Aorta (tissue), 5 donors: ENCODE measurements at regions of chr7 and their contacts with region 1.

Region 1: DNA sequence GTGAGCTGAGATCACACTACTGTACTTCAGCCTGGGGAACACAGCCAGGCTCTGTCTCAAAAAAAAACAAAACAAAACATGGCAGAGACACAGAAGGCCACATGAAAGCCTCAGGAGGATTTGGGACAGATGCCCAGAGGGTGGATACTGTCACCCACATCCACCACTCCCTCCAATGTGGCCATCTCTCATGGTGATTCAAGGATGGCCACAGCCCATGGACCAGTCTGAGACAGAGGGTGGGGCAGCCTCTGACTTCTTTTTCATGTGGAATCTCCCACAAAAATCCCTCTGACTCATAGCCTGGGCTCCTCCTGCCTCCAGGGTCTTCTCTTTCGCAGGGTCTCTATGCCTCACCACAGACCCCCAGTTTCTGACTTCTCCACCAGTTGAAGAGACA is 59.0 kb upstream of the GTF2I start:
- DNase-seq: no peak
- ATAC-seq: no peak
- H3K4me3 ChIP-seq: no peak overlapping the region
- H3K27ac ChIP-seq: no peak overlapping the region
- H3K4me1 ChIP-seq: no peaks in the 10 kb centered on the region
- H3K27me3 ChIP-seq: no peaks in the 10 kb centered on the region

Region 2: GRCh38 chr7:74625446-74625845 is 26.9 kb after region 1 on chr7:
- intact Hi-C with region 1: no loop called
- DNase-seq: no peak
- ATAC-seq: peak; percentile 75
- H3K4me3 ChIP-seq: no peak overlapping the region
- H3K27ac ChIP-seq: no peak overlapping the region
- H3K4me1 ChIP-seq: no peaks in the 10 kb centered on the region
- H3K27me3 ChIP-seq: no peaks in the 10 kb centered on the region

Region 3: GRCh38 chr7:74653686-74654181 is 55.2 kb after region 1 on chr7:
- intact Hi-C with region 1: loop called in 1 of 2 experiments (anchors 10 kb)
- DNase-seq: peak in 1 of 2 donors; percentile 11
- ATAC-seq: no peak
- H3K4me3 ChIP-seq: no peak overlapping the region
- H3K27ac ChIP-seq: no peak overlapping the region
- H3K4me1 ChIP-seq: no peaks in the 10 kb centered on the region
- H3K27me3 ChIP-seq: no peaks in the 10 kb centered on the region